ENCODE measurements at regions of chr4 and their contacts with region 1.

Region 1: GRCh38 chr4:24912252-24913118 is at the start of gene CCDC149:
- DNase-seq: peak; percentile 74 to 85 (median 77)
- ATAC-seq: peak; percentile 74 to 91 (median 90)
- H3K4me3 ChIP-seq: peak within 1 kb of the TSS; percentile 45 to 93 (median 66)
- H3K27ac ChIP-seq: peak within 1 kb of the TSS; percentile 79 to 98 (median 91)
- H3K4me1 ChIP-seq: peaks cover 0 to 21% (median 8%) of the 10 kb centered on the region in 12 donors
- H3K27me3 ChIP-seq: no peaks in the 10 kb centered on the region
- CTCF ChIP-seq: peak in 7 of 12 donors; percentile 6 to 38 (median 21)
- POLR2A ChIP-seq: peak in 1 of 2 donors; percentile 32
- total RNA-seq, gene CCDC149: 5.8 to 14.7 (median 10.3) TPM

Region 2: GRCh38 chr4:24382381-24382780 is 530.1 kb before region 1 on chr4:
- intact Hi-C with region 1: no loop called
- DNase-seq: no peak
- ATAC-seq: peak in 2 of 4 donors; percentile 60 to 82
- H3K4me3 ChIP-seq: no peak overlapping the region
- H3K27ac ChIP-seq: no peak overlapping the region
- H3K4me1 ChIP-seq: no peaks in the 10 kb centered on the region
- H3K27me3 ChIP-seq: no peaks in the 10 kb centered on the region
- CTCF ChIP-seq: no peak
- POLR2A ChIP-seq: no peak

Region 3: GRCh38 chr4:24584175-24584850 is 328.2 kb before region 1 on chr4 and contains the start of gene DHX15:
- intact Hi-C with region 1: loop called in 3 of 10 experiments (anchors 5 to 10 kb)
- DNase-seq: peak; percentile 96 to 97 (median 97)
- ATAC-seq: peak; percentile 93 to 98 (median 96)
- H3K4me3 ChIP-seq: peak within 1 kb of the TSS; percentile 73 to 100 (median 97)
- H3K27ac ChIP-seq: peak within 1 kb of the TSS; percentile 90 to 99 (median 98)
- H3K4me1 ChIP-seq: peaks cover 8 to 47% (median 31%) of the 10 kb centered on the region in 12 donors
- H3K27me3 ChIP-seq: no peaks in the 10 kb centered on the region
- CTCF ChIP-seq: no peak
- POLR2A ChIP-seq: no peak
- total RNA-seq, gene DHX15: 45.4 to 67.8 (median 58.0) TPM

Region 4: GRCh38 chr4:25030277-25031076 is 118.0 kb after region 1 on chr4 and contains the start of gene LGI2:
- intact Hi-C with region 1: loop called in 1 of 10 experiments (anchors 10 kb)
- DNase-seq: peak; percentile 58 to 77 (median 67)
- ATAC-seq: peak in 3 of 4 donors; percentile 70 to 86 (median 81)
- H3K4me3 ChIP-seq: peak within 1 kb of the TSS; percentile 37 to 76 (median 61)
- H3K27ac ChIP-seq: peak within 1 kb of the TSS in 7 of 12 donors; percentile 14 to 70 (median 54)
- H3K4me1 ChIP-seq: peaks cover 0 to 16% (median 4%) of the 10 kb centered on the region in 12 donors
- H3K27me3 ChIP-seq: peaks cover 0 to 39% (median 0%) of the 10 kb centered on the region in 9 donors
- CTCF ChIP-seq: no peak
- POLR2A ChIP-seq: no peak
- total RNA-seq, gene LGI2: 0.50 to 10.6 (median 2.7) TPM

Region 5: GRCh38 chr4:25144870-25145481 is 232.5 kb after region 1 on chr4:
- intact Hi-C with region 1: loop called in 1 of 10 experiments (anchors 10 kb)
- DNase-seq: no peak
- ATAC-seq: no peak
- H3K4me3 ChIP-seq: no peak overlapping the region
- H3K27ac ChIP-seq: no peak overlapping the region
- H3K4me1 ChIP-seq: peaks cover 0 to 6% (median 0%) of the 10 kb centered on the region in 12 donors
- H3K27me3 ChIP-seq: no peaks in the 10 kb centered on the region
- CTCF ChIP-seq: peak; percentile 28 to 75 (median 62)
- POLR2A ChIP-seq: no peak